Activated CD4-positive, alpha-beta T cell treated with anti-CD3 and anti-CD28 coated beads, Interleukin-2, amount 10 ng/mL, durations not matched to agents 7 days and 5 days (primary cell): ENCODE measurements at regions of chr1 and their contacts with region 1.

Region 1: GRCh38 chr1:116514708-116515525 is 55.9 kb downstream of the CD58 start:
- DNase-seq: peak; percentile 71
- H3K4me3 Mint-ChIP-seq: peak overlapping the region; percentile 59
- H3K27ac Mint-ChIP-seq: peak overlapping the region; percentile 89
- H3K4me1 Mint-ChIP-seq: peaks cover 64% of the 10 kb centered on the region
- H3K27me3 Mint-ChIP-seq: no peaks in the 10 kb centered on the region

Region 2: DNA sequence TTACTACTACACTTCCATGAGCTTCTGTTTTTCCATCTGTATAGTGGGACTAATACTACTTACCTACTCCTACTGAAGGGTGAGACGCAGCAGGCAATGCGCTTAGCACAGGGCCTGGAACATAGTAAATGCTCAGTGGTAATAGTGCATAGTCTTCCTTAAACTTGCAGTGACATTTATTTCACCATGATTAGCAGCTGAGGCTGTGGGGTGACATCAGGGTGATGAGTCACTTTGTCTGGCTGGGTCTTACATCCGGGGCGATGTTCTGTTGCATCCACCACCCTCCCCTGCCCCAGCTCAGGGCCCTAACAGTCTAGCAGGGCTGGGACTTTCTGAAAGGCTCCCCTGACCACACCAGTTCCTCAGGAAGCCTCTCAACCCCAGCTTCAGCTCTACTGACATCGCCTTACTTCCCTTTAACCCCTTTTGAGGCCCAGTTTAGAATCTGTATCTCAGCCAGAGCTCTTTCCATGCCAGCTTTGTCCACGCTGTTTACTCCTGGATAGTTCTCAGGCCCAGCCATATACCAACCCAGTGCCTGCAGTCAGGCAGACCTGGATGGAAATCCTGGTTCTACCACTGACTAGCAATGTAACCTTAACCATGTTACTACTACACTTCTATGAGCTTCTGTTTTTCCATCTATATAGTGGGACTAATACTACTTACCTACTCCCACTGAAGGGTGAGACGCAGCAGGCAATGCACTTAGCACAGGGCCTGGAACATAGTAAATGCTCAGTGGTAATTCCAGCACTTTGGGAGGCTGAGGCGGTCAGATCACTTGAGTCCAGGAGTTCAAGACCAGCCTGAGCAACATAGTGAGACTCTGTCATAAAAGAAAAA is 10.4 kb before region 1 on chr1:
- CTCF ChIA-PET with region 1: interaction called, 14 read pairs
- POLR2A ChIA-PET with region 1: interaction called, 4 read pairs
- DNase-seq: peak; percentile 91
- H3K4me3 Mint-ChIP-seq: peak overlapping the region; percentile 21
- H3K27ac Mint-ChIP-seq: peak overlapping the region; percentile 84
- H3K4me1 Mint-ChIP-seq: peaks cover 82% of the 10 kb centered on the region
- H3K27me3 Mint-ChIP-seq: no peaks in the 10 kb centered on the region